Right ventricle myocardium superior (tissue), 1 donor: ENCODE measurements at regions of chr4 and their contacts with region 1.

Region 1: DNA sequence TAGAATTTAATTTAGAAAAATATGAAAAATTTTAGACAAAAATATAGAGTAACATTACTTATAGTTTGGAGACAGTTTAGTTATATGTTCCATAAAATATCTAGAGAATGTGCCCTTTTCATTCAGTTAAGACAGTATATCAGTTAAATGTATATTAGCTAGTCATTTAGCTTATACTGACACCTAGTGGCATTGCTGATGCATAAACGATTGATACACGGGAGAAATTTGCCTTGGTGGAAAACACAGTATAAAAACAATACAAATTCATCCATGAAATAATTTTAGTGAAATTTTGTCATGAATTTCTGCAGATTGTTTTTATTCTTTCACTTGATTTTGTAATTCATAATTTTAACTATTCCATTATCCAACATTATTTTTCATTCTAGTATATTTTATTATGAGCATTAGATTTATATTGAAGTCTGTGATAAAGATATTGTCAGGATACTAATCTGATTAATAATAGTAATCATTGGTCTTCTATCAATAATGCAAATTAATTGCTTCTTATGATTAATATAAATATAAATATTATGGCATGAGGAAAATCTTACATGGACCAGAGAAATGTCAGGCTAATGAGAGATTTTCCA is 219.0 kb downstream of the TLL1 start:
- DNase-seq: no peak
- ATAC-seq: no peak

Region 2: DNA sequence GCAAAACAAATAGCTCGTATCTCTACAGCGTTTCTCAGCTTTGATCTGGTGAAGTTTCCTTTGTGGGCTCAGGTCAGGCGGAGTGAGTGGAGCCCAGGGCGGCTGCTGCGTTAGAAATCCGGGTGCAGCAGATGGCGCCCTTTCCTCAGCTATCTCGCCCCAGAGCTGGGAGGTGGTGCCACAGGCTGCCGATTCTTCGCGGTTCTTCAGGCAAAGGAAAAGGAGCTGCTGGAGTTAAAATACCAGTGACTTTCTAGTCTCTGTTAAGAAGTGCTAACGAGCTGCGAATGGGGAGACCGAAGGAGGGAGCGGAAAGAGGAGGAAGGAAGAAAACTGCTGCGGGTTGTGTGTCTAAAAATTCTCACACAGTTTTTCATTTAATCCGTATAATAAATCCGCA is 598.7 kb before region 1 on chr4:
- intact Hi-C with region 1: loop called (anchors 5 kb)
- DNase-seq: peak; percentile 81
- ATAC-seq: peak; percentile 96